CD4-positive, alpha-beta T cell (primary cell): ENCODE measurements at regions of chr3 and their contacts with region 1.

Region 1: DNA sequence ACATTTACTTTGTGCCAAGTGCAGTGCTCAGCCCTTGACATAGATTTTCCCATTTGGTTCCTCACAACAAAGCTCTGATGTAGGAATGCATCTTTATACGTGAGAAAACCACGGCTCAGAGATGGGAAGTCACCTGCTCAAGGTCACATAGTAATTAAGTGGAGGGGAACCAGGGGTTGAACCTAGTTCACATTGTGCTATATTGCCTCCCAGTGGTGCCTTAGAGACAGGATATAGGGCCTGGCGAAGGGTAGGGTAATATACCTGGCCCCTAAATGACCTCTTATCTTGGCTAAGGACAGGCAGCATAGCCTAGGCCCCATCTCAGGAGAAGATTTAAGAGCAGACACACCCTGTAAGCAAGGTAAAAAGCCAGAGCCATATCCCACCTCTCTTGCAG is 71.5 kb downstream of the FOXP1 start:
- DNase-seq: peak in 9 of 14 experiments; percentile 20 to 85 (median 46)
- ATAC-seq: peak; percentile 99
- H3K4me3 ChIP-seq: no peak overlapping the region
- H3K4me3 Mint-ChIP-seq: no peak overlapping the region
- H3K27ac ChIP-seq: no peak overlapping the region
- H3K27ac Mint-ChIP-seq: no peak overlapping the region
- H3K4me1 ChIP-seq: peaks cover 22% of the 10 kb centered on the region
- H3K4me1 Mint-ChIP-seq: peaks cover 21% of the 10 kb centered on the region
- H3K27me3 ChIP-seq: no peaks in the 10 kb centered on the region
- H3K27me3 Mint-ChIP-seq: no peaks in the 10 kb centered on the region
- CTCF ChIP-seq: peak; percentile 70

Region 2: GRCh38 chr3:71006810-71007785 is 504.9 kb before region 1 on chr3:
- CTCF ChIA-PET with region 1: interaction called, 3 read pairs
- POLR2A ChIA-PET with region 1: interaction called, 3 read pairs
- intact Hi-C with region 1: loop called (anchors 5 kb)
- DNase-seq: peak in 3 of 14 experiments; percentile 61 to 66 (median 63)
- ATAC-seq: no peak
- H3K4me3 ChIP-seq: no peak overlapping the region
- H3K4me3 Mint-ChIP-seq: peak overlapping the region; percentile 22
- H3K27ac ChIP-seq: no peak overlapping the region
- H3K27ac Mint-ChIP-seq: peak overlapping the region; percentile 96
- H3K4me1 ChIP-seq: peaks cover 38% of the 10 kb centered on the region
- H3K4me1 Mint-ChIP-seq: peaks cover 83% of the 10 kb centered on the region
- H3K27me3 ChIP-seq: no peaks in the 10 kb centered on the region
- H3K27me3 Mint-ChIP-seq: no peaks in the 10 kb centered on the region
- CTCF ChIP-seq: peak; percentile 76

Region 3: DNA sequence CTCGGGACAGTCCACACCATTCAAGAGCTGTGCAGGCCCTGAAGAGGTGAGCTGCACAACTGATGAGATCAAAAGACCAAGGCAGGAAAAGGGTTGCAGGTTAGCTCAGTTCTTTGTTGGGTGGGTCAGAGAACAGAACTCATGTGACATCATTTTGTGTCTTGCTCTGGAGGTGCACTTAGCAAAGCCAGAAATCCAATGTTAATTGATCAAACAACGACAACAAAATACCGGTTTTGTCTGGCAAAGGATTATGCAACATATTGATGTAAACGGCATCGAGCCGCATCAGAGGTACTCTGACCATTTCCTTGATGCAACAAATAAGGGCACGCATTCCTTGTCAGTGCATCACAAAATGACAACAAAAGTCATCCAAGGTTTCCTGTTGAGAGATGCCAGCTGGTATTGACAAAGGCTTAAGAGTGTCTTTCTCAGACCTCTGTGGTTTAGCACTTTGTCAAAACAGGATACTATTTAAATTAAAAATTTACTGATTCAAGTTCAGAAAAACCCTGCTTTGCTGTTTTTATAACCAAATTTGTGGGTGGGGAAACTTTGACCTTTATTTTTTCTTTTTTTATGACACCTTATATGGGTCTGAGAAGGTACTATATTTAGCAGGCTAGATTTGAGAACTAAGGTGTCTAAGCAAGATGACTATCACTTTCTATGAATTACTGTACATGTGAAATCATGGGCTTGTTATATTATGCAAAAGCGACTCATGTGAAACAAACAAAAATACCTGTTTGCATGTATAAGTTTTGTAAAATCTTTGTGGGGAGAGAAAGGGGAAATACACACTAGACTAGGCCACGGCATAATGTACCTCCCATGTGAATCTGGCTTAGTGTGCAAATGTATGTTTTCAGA is 424.6 kb before region 1 on chr3:
- CTCF ChIA-PET with region 1: no interaction called
- POLR2A ChIA-PET with region 1: no interaction called
- intact Hi-C with region 1: loop called in 1 of 2 experiments (anchors 5 kb)
- DNase-seq: peak in 10 of 14 experiments; percentile 14 to 86 (median 47)
- ATAC-seq: peak; percentile 77
- H3K4me3 ChIP-seq: peak overlapping the region; percentile 11
- H3K4me3 Mint-ChIP-seq: peak overlapping the region; percentile 69
- H3K27ac ChIP-seq: peak overlapping the region; percentile 57 to 71
- H3K27ac Mint-ChIP-seq: peak overlapping the region; percentile 86
- H3K4me1 ChIP-seq: peaks cover 81% of the 10 kb centered on the region
- H3K4me1 Mint-ChIP-seq: peaks cover 86% of the 10 kb centered on the region
- H3K27me3 ChIP-seq: no peaks in the 10 kb centered on the region
- H3K27me3 Mint-ChIP-seq: no peaks in the 10 kb centered on the region
- CTCF ChIP-seq: no peak

Region 4: GRCh38 chr3:71380096-71380495 is 131.9 kb before region 1 on chr3:
- CTCF ChIA-PET with region 1: no interaction called
- POLR2A ChIA-PET with region 1: no interaction called
- intact Hi-C with region 1: loop called in 1 of 2 experiments (anchors 5 kb)
- DNase-seq: no peak
- ATAC-seq: no peak
- H3K4me3 ChIP-seq: no peak overlapping the region
- H3K4me3 Mint-ChIP-seq: no peak overlapping the region
- H3K27ac ChIP-seq: no peak overlapping the region
- H3K27ac Mint-ChIP-seq: peak overlapping the region; percentile 31
- H3K4me1 ChIP-seq: peaks cover 8% of the 10 kb centered on the region
- H3K4me1 Mint-ChIP-seq: peaks cover 80% of the 10 kb centered on the region
- H3K27me3 ChIP-seq: no peaks in the 10 kb centered on the region
- H3K27me3 Mint-ChIP-seq: no peaks in the 10 kb centered on the region
- CTCF ChIP-seq: no peak

Region 5: DNA sequence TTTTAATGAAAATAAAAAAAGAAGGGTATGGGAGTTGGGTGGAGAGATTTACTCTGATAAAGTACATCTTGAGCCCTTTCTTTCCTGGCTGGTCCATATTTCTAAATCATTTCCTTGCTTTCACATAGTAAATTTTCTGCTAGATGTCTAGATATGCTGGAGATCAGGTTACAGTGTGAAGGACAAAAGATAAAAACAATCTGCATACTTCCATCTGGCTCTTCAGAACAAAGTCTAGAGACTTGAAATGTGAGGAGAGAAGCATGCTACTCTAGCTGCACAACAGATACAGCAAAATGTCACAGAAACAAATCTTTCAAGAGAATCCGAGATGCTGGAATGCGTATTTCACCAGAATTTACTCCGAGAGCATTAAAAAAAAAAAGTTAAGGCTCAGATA is 29.3 kb after region 1 on chr3:
- CTCF ChIA-PET with region 1: no interaction called
- POLR2A ChIA-PET with region 1: no interaction called
- intact Hi-C with region 1: no loop called
- DNase-seq: no peak
- ATAC-seq: no peak
- H3K4me3 ChIP-seq: no peak overlapping the region
- H3K4me3 Mint-ChIP-seq: no peak overlapping the region
- H3K27ac ChIP-seq: no peak overlapping the region
- H3K27ac Mint-ChIP-seq: no peak overlapping the region
- H3K4me1 ChIP-seq: no peaks in the 10 kb centered on the region
- H3K4me1 Mint-ChIP-seq: peaks cover 11% of the 10 kb centered on the region
- H3K27me3 ChIP-seq: no peaks in the 10 kb centered on the region
- H3K27me3 Mint-ChIP-seq: no peaks in the 10 kb centered on the region
- CTCF ChIP-seq: no peak